Cardiac septum (tissue), 1 donor: ENCODE measurements at regions of chr5 and their contacts with region 1.

Region 1: DNA sequence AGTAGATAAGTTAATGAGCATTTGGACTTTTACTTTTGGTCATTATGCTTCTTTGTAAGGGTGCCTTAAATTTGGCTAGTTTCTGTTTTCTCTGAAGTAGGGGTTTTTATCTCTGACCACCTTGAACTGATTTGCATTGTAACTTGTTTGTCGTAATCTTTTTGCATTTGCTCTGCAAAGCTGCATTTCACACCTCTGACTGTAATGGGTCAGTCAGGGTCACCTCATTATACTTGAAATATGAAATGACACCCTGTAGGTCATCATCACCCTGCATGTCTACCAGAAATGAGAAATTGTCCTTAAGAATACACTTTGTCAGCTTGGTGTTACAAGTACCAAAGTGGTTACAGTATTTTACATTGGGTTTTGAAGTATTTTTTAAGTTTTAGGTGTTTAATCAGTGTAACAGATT is 74.0 kb downstream of the KCNN2 start:
- DNase-seq: no peak

Region 2: GRCh38 chr5:114010362-114010761 is 425.5 kb before region 1 on chr5:
- intact Hi-C with region 1: loop called (anchors 5 kb)
- DNase-seq: no peak